A549 (cell line): ENCODE measurements at regions of chr6 and their contacts with region 1.

Region 1: GRCh38 chr6:99868074-99868702 is 125.8 kb downstream of the MCHR2 start:
- DNase-seq: peak; percentile 18 to 61
- ATAC-seq: peak; percentile 91 to 92
- H3K4me3 ChIP-seq: no peak overlapping the region
- H3K27ac ChIP-seq: no peak overlapping the region
- H3K4me1 ChIP-seq: no peaks in the 10 kb centered on the region
- CTCF ChIP-seq: peak; percentile 86
- EP300 ChIP-seq: no peak
- POLR2A ChIP-seq: no peak
- RAD21 ChIP-seq: peak; percentile 74 to 88

Region 2: GRCh38 chr6:99629293-99629692 is 238.9 kb before region 1 on chr6:
- CTCF ChIA-PET with region 1: no interaction called
- POLR2A ChIA-PET with region 1: no interaction called
- DNase-seq: no peak
- ATAC-seq: no peak
- H3K4me3 ChIP-seq: no peak overlapping the region
- H3K27ac ChIP-seq: no peak overlapping the region
- H3K4me1 ChIP-seq: no peaks in the 10 kb centered on the region
- CTCF ChIP-seq: no peak
- EP300 ChIP-seq: no peak
- POLR2A ChIP-seq: no peak
- RAD21 ChIP-seq: no peak

Region 3: GRCh38 chr6:99882128-99882702 is 14.0 kb after region 1 on chr6:
- CTCF ChIA-PET with region 1: interaction called, 20 read pairs
- POLR2A ChIA-PET with region 1: no interaction called
- DNase-seq: no peak
- ATAC-seq: no peak
- H3K4me3 ChIP-seq: no peak overlapping the region
- H3K27ac ChIP-seq: no peak overlapping the region
- H3K4me1 ChIP-seq: no peaks in the 10 kb centered on the region
- CTCF ChIP-seq: no peak
- EP300 ChIP-seq: no peak
- POLR2A ChIP-seq: no peak
- RAD21 ChIP-seq: no peak

Region 4: GRCh38 chr6:99894815-99895214 is 26.6 kb after region 1 on chr6:
- CTCF ChIA-PET with region 1: interaction called, 11 read pairs
- POLR2A ChIA-PET with region 1: no interaction called
- DNase-seq: no peak
- ATAC-seq: no peak
- H3K4me3 ChIP-seq: no peak overlapping the region
- H3K27ac ChIP-seq: no peak overlapping the region
- H3K4me1 ChIP-seq: no peaks in the 10 kb centered on the region
- CTCF ChIP-seq: no peak
- EP300 ChIP-seq: no peak
- POLR2A ChIP-seq: no peak
- RAD21 ChIP-seq: no peak

Region 5: DNA sequence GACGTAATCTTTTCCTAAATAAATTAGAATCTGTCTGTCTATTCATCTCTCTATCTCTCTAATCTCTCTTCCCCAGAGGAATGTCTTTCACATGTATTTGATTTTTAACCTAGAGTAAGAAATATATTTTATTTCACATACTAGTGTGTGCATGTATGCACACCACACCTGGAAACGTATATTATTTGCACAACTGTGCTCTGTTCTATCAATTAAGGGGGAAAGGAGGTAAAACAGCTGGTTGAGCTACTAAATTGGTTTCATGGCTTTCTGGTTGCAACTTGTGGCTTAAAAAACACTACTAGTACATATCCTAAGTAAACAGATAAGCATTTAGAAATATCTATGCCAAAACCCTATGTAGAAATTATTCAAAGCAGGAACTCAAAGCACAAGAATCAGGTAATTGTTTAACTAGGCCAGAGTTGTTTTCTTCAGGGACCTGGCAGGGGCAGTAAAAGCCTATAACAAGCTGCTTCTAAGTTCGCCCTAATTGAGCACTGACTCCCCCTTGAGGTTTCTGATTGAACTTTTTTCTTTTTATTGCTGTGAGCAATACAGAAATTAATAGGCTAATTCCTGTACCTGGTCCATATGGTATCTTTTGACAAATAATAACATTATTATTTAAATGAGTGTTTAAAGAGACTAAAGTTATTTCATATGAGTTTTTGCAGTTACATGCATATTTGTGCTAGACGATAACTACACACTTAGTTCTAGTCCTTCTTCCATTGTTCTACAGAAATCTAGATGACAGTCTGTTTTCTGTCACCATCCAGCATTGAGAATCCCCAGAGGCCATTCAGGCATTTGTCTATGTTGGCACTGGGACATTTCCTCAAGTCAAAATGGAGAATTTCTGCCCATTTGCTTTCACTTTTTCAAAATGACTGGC is 37.3 kb after region 1 on chr6:
- CTCF ChIA-PET with region 1: interaction called, 13 read pairs
- POLR2A ChIA-PET with region 1: no interaction called
- DNase-seq: peak; percentile 3 to 53
- ATAC-seq: peak; percentile 70 to 83; a peak in 5 of 6 replicates
- H3K4me3 ChIP-seq: no peak overlapping the region
- H3K27ac ChIP-seq: no peak overlapping the region
- H3K4me1 ChIP-seq: no peaks in the 10 kb centered on the region
- CTCF ChIP-seq: peak; percentile 46; the same call in 2 of the 3 replicates
- EP300 ChIP-seq: no peak
- POLR2A ChIP-seq: no peak
- RAD21 ChIP-seq: peak; percentile 39 to 43

Region 6: GRCh38 chr6:100001915-100002388 is 133.8 kb after region 1 on chr6:
- CTCF ChIA-PET with region 1: interaction called, 13 read pairs
- POLR2A ChIA-PET with region 1: no interaction called
- DNase-seq: peak; percentile 10 to 50
- ATAC-seq: peak; percentile 82 to 88
- H3K4me3 ChIP-seq: no peak overlapping the region
- H3K27ac ChIP-seq: no peak overlapping the region
- H3K4me1 ChIP-seq: no peaks in the 10 kb centered on the region
- CTCF ChIP-seq: peak; percentile 69
- EP300 ChIP-seq: no peak
- POLR2A ChIP-seq: no peak
- RAD21 ChIP-seq: peak; percentile 72 to 73

Region 7: DNA sequence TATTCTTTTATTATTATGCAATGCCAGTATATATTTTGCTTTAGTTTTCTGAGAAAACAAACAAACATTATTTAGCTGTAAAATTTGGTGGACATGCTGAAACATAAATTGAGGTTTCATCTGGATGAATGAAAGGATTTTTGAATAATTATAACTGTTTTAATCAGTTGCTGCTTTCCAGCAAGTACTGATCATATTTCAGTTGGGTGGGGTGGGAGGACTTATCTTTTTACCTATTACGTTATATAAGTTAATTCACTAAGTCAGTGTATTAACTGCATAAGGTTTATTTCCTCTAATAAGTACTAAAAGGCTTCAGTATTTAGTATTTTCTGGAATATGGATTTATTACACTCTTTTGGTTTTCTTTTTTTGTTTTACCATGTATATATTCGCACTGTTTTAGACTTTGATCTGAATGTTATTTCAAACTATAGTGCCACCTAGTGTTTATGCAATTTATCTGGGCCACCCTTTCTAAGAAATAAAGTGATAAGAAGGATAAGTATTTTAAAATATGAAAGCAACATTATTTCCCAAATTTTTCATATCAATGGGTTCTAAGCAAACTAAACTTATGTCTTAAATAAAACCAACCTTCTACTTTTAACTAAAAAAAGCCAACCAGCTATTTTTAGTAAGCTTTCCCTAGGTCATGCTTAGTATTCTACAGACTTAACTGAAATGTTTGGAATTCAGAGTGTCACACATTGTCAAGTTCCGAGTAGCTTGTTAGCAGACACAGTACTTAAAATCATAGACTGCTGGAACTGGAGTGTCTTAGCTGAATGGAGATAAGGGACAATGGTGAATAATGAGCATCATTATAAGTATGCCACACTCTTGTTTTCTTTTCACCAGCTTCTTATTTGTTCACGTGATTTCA is 231.2 kb after region 1 on chr6:
- CTCF ChIA-PET with region 1: interaction called, 61 read pairs
- POLR2A ChIA-PET with region 1: no interaction called
- DNase-seq: peak in 1 of 2 experiments; percentile 20
- ATAC-seq: peak in 1 of 2 experiments; percentile 62; a peak in 4 of 6 replicates
- H3K4me3 ChIP-seq: no peak overlapping the region
- H3K27ac ChIP-seq: no peak overlapping the region
- H3K4me1 ChIP-seq: no peaks in the 10 kb centered on the region
- CTCF ChIP-seq: peak; percentile 57
- EP300 ChIP-seq: no peak
- POLR2A ChIP-seq: no peak
- RAD21 ChIP-seq: peak; percentile 39 to 49